ENCODE measurements at regions of chr9 and their contacts with region 1.

Region 1: DNA sequence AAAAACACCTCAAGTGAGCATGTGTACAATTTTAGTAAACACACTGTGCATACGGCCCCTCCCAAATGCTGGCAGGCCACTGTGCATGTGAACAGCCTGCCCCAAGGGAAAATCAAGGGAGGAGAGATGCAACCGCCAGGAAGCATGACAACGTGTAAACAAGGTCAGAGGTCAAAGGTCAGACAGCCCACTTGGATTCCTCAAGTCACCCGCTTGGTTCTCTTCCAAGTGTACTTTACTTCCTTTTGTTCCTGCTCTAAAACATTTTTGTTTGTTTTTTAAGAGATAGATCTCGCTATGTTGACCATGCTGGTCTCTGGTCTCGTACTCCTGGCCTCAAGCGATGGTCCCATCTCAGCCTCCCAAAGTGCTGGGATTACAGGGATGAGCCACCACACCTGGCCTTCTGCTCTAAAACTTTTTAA is 126.7 kb upstream of the SHB start:
- DNase-seq: no peak
- H3K4me3 ChIP-seq: no peak overlapping the region
- H3K27ac ChIP-seq: no peak overlapping the region
- H3K4me1 ChIP-seq: no peaks in the 10 kb centered on the region
- H3K27me3 ChIP-seq: peaks cover 0 to 8% (median 0%) of the 10 kb centered on the region in 4 donors
- CTCF ChIP-seq: no peak
- EP300 ChIP-seq: no peak
- POLR2A ChIP-seq: no peak

Region 2: DNA sequence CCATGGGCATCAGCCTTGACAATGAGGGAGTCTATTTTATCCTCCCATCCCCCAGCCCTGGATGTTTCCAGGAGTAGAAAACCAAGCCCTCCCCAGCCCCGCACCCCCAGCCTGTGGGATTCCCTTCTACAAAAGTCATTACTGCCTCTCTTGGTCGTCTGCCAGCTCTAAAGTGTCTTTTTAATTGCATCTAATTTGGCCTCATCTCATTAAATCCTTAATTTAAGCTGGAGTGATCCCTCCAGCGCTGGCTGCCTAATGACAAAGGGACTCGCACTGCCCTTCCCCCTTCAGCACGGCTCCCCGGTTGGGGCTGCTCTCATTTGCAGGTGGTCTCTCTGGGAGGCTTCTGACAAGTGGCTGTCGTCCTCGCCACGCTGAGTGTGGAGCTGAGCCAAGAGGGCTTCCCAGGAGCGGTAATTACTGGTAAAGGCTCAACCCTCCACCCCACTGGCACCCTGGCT is 88.9 kb after region 1 on chr9:
- intact Hi-C with region 1: loop called (anchors 10 kb)
- DNase-seq: peak; percentile 91
- H3K4me3 ChIP-seq: no peak overlapping the region
- H3K27ac ChIP-seq: no peak overlapping the region
- H3K4me1 ChIP-seq: no peaks in the 10 kb centered on the region
- H3K27me3 ChIP-seq: no peaks in the 10 kb centered on the region
- CTCF ChIP-seq: no peak
- EP300 ChIP-seq: no peak
- POLR2A ChIP-seq: no peak

Region 3: DNA sequence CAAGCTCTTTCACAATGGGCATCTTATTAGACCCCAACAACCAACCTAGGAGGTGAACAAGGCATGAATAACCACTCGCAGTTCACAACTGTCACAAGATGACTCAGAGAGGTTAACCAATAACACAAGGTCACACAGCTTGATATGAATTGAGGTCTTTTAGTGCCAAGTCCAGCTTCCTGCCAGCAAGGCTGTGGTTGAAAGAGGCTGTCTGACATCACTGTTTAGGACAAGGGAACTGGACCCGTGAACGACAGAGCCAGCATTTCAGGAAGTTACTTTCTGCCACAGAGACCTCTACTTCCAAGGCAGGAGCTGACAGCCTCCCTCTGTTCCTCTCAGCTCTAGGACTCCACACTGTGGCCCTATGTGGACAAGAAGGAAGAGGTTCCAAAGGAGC is 143.3 kb after region 1 on chr9:
- intact Hi-C with region 1: no loop called
- DNase-seq: no peak
- H3K4me3 ChIP-seq: no peak overlapping the region
- H3K27ac ChIP-seq: no peak overlapping the region
- H3K4me1 ChIP-seq: peaks cover 0 to 12% (median 6%) of the 10 kb centered on the region in 4 donors
- H3K27me3 ChIP-seq: no peaks in the 10 kb centered on the region
- CTCF ChIP-seq: no peak
- EP300 ChIP-seq: no peak
- POLR2A ChIP-seq: no peak

Measured in esophagus muscularis mucosa (tissue), 4 donors.